ENCODE measurements at regions of chr6 and their contacts with region 1.

Region 1: DNA sequence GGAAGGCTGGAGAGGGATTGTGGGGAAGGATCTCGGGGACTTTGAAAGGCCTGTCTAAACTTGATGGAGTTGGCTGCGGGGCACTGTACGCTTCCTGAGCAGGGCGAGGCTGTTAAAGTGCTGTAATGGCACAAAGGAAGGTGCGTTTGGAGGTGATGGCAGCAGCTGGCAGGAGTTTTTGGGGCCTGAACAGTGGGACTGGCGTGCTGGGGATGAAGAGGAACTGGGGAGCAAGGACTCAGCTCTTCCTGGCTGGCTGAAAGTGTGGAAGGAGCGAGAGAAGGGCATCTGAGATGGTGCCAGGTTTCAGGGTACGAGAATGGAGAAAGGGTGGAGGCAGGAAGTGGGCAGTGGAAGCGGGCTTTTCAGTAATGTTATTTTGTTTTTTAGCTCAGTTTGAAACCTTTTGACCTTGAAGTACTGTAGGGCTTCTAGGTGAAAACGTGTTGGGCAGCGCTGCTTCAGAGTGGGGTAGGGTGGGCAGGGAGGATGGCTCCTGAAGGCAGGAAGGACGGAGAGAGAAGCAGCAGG is 8.0 kb downstream of the TMEM181 start:
- DNase-seq: no peak
- H3K4me3 ChIP-seq: no peak overlapping the region
- H3K27ac ChIP-seq: no peak overlapping the region
- H3K4me1 ChIP-seq: no peaks in the 10 kb centered on the region
- CTCF ChIP-seq: no peak

Region 2: DNA sequence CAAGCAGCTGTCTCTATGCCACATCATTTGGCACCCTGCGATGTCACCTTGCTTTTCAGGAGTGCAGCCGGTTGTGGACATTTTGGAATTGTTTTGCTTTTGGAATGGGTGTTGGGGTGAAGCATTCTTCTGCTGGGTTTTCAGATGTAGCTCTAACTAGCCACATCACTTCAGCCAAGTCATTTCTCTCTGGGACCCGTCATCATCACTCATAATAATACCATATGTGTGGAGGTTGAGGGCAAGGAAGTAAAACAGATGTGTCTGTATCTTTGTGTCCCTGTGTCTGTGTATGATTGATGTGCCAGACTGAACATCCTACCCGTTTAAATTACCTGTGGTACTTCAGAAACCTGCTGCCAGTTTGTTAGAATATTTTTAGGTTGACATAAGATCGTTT is 305.2 kb before region 1 on chr6:
- CTCF ChIA-PET with region 1: interaction called, 15 read pairs
- POLR2A ChIA-PET with region 1: no interaction called
- intact Hi-C with region 1: no loop called
- DNase-seq: no peak
- H3K4me3 ChIP-seq: no peak overlapping the region
- H3K27ac ChIP-seq: no peak overlapping the region
- H3K4me1 ChIP-seq: no peaks in the 10 kb centered on the region
- CTCF ChIP-seq: no peak

Region 3: GRCh38 chr6:158589366-158589765 is 21.4 kb after region 1 on chr6:
- CTCF ChIA-PET with region 1: interaction called, 19 read pairs
- POLR2A ChIA-PET with region 1: no interaction called
- intact Hi-C with region 1: no loop called
- DNase-seq: no peak
- H3K4me3 ChIP-seq: no peak overlapping the region
- H3K27ac ChIP-seq: no peak overlapping the region
- H3K4me1 ChIP-seq: no peaks in the 10 kb centered on the region
- CTCF ChIP-seq: no peak

Region 4: DNA sequence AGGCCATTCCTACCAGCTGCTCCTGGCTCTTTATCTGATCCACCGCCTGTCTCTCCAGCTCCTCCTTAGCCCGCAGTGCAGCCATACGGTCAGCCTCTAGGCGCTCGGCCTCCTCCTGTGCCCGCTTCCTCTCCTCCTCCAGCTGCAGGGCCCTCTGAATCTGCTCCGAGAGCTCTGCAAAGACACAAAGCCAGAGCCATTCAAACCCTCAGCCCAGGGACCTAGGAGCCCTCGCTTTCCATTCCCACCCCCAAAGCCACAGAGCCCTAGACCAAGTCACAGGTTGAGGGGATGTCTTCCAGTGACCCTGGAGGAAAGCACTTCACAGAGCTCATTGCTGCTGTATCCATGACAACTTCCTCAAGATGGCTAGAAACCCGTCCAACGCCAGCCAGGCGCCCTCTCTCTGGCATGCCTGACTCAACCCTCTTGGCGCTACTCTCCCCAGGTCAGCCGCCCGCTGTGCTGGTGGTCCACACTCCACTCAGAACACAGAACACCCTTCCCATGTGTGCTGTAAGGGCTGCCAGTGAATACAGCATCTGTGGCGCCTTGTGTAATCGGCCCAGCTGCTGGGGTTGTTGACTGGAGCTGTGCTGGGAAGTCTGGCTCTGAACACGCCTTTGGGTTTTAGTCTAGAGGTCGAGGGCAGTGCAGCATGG is 202.0 kb after region 1 on chr6:
- CTCF ChIA-PET with region 1: no interaction called
- POLR2A ChIA-PET with region 1: no interaction called
- intact Hi-C with region 1: no loop called
- DNase-seq: no peak
- H3K4me3 ChIP-seq: no peak overlapping the region
- H3K27ac ChIP-seq: no peak overlapping the region
- H3K4me1 ChIP-seq: no peaks in the 10 kb centered on the region
- CTCF ChIP-seq: no peak

Measured in OCI-LY7 (cell line).